Lower lobe of right lung (tissue), 2 donors: ENCODE measurements at regions of chr1 and their contacts with region 1.

Region 1: GRCh38 chr1:39901698-39902459 is at the start of gene MYCL:
- DNase-seq: peak; percentile 92
- ATAC-seq: peak; percentile 96
- H3K4me3 ChIP-seq: peak within 1 kb of the TSS; percentile 69
- H3K27ac ChIP-seq: peak within 1 kb of the TSS; percentile 64
- H3K4me1 ChIP-seq: peaks cover 20% of the 10 kb centered on the region
- H3K27me3 ChIP-seq: peaks cover 36% of the 10 kb centered on the region
- CTCF ChIP-seq: peak; percentile 73
- total RNA-seq, gene MYCL: 3.9 TPM

Region 2: DNA sequence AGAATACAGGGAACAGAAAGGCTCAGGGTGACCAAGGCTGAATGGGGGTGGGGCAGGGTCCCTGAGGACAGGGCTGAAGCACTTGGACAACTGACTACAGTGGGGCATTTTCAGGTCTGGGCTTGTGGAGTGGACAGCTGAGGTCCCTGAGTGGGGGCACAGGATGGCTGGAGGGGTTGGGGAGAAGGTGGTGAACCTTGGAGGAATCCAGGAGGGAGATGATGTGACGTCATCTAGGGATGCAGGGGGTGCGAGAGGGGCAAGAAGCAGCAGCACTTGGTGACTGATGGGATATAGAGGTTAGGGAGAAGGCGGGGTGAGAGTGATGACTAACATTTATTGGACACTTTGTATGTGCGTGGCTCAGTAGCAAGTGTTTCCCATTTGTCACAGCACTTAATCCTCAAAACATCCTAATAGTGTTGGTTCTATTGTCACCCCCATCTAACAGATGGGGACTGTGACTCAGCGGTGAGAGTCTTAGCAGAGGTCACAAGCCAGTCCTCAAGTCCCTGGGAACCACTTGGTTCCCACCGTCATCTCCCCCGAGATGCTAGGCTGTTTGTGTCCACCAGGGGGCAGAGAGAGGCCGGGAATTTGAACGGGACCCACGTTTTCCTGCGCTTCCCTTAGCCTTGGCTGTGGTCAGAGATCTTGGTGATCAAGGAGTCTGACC is 85.3 kb before region 1 on chr1:
- intact Hi-C with region 1: loop called (anchors 10 kb)
- DNase-seq: peak; percentile 75
- ATAC-seq: peak; percentile 93
- H3K4me3 ChIP-seq: no peak overlapping the region
- H3K27ac ChIP-seq: no peak overlapping the region
- H3K4me1 ChIP-seq: no peaks in the 10 kb centered on the region
- H3K27me3 ChIP-seq: peaks cover 10% of the 10 kb centered on the region
- CTCF ChIP-seq: peak; percentile 87

Region 3: DNA sequence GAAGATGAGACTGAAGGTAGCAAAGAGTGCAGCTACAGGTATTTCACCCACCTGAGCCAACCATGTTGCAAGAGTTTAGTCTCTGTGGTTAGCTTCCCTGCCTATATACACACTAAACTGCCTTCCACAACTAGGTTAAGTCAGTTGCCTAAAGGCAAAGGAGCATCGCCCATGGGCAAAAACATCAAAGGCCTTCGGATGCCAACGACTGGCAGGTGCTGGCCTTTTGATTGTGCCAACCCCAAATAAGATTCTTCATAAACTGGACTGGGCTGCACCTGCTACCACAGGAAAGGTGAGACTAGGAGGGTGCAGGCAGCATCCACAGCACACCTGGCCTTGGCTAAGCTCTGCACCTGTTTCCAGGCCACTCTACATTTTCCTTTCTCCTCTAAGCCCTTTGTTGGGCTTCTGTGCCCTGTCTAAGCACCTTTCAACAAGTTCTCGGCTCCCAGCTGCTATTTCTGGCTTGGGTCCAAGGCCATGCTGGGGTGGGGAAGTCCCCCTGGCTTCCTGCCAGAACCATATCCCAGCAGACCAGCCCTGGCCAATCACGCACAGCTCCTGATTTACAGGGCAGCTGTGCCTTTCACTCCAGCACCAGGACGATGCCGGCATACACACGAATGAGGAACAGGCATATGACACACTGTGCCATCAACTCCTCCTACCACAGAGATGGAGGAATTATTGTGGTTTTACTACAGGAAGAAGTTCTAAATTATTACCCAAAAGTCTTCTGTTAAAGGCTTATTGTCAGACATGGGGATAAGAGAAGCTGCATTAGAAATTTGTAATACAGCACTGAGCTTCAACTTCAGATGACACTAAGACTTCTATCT is 56.4 kb before region 1 on chr1:
- intact Hi-C with region 1: no loop called
- DNase-seq: peak; percentile 85
- ATAC-seq: peak; percentile 92 to 96
- H3K4me3 ChIP-seq: no peak overlapping the region
- H3K27ac ChIP-seq: peak overlapping the region; percentile 19
- H3K4me1 ChIP-seq: peaks cover 30% of the 10 kb centered on the region
- H3K27me3 ChIP-seq: no peaks in the 10 kb centered on the region
- CTCF ChIP-seq: no peak

Region 4: GRCh38 chr1:40049725-40050124 is 147.8 kb after region 1 on chr1:
- intact Hi-C with region 1: no loop called
- DNase-seq: no peak
- ATAC-seq: peak in 1 of 2 donors; percentile 23
- H3K4me3 ChIP-seq: no peak overlapping the region
- H3K27ac ChIP-seq: no peak overlapping the region
- H3K4me1 ChIP-seq: peaks cover 72% of the 10 kb centered on the region
- H3K27me3 ChIP-seq: no peaks in the 10 kb centered on the region
- CTCF ChIP-seq: no peak

Region 5: DNA sequence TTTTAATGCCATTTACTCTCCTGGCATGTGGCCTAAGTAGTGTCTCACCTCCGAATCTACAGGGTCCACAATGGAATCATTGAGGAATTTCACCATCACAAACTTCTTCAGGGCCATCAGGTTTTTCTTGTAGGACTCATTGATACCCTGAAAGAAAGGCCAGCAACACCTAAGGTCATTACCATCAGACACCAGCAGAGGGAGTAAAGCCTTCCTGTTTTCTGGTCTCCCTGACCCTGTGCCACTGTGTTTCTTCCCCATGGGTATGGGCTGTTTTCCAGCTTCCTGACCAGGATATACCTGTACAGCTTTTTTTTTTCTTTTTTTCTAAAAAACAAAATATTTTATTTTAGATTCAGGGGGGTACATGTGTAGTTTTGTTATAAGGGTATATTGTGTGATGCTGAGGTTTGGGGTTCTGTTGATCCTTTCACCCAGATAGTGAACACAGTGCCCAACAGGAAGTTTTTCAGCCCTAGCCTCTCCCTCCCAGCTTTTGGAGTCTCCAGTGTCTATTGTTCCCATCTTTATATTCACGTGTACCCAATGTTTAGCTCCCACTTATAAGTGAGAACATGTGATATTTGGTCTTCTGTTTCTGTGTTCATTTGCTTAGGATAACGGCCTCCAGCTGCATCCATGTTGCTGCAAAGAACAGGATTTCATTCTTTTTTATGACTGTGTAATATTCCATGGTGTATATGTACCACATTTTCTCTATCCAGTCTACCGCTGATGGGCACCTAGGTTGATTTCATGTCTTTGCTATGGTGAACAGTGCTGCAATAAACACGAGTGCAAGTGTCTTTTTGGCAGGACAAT is 176.8 kb after region 1 on chr1:
- intact Hi-C with region 1: no loop called
- DNase-seq: no peak
- ATAC-seq: peak; percentile 75 to 81
- H3K4me3 ChIP-seq: no peak overlapping the region
- H3K27ac ChIP-seq: no peak overlapping the region
- H3K4me1 ChIP-seq: peaks cover 42% of the 10 kb centered on the region
- H3K27me3 ChIP-seq: no peaks in the 10 kb centered on the region
- CTCF ChIP-seq: peak; percentile 78

Region 6: GRCh38 chr1:40241362-40241761 is 339.5 kb after region 1 on chr1:
- intact Hi-C with region 1: no loop called
- DNase-seq: no peak
- ATAC-seq: peak in 1 of 2 donors; percentile 38
- H3K4me3 ChIP-seq: no peak overlapping the region
- H3K27ac ChIP-seq: no peak overlapping the region
- H3K4me1 ChIP-seq: no peaks in the 10 kb centered on the region
- H3K27me3 ChIP-seq: no peaks in the 10 kb centered on the region
- CTCF ChIP-seq: no peak